MCF 10A (cell line): ENCODE measurements at regions of chr19 and their contacts with region 1.

Region 1: DNA sequence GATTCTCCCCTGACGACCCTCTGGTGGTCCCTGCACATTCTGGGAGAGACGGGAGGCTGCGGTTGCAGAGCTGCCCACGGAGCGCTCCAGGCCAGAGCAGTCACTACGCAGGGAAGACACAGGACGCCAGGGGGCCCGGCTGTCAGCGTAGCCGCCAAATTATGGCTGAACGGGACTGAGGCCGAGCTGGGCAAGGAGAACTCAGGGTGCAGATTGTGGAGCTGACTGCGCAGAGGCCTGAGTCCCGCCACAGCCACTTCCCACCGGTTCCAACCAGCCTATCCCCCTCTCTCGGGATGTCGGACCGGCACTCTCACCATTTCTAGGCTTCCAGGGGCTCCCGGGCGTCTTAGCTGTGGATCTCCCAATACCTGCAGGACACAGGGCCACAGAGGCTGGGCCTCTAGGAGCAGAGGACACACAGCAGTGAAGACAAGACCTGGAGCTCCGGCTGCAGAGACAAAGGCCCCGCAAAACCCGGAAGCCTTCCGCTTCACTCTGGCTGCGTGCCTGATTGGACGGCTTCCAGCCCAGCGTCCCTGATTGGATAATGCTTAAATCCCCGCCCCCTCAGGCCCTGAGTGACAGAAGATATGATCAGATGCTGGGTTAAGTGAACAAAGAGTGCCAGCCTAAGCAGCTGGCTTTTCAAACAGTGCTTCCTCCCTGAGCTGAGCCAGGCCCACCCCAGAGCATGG is at the start of gene ZNF737:
- DNase-seq: peak; percentile 82
- H3K4me3 Mint-ChIP-seq: peak within 1 kb of the TSS; percentile 78
- H3K27ac Mint-ChIP-seq: peak within 1 kb of the TSS; percentile 80
- H3K4me1 Mint-ChIP-seq: no peaks in the 10 kb centered on the region
- H3K27me3 Mint-ChIP-seq: no peaks in the 10 kb centered on the region
- CTCF ChIP-seq: no peak
- total RNA-seq, gene ZNF737: 1.1 and 3.2 TPM in 2 replicates

Region 2: GRCh38 chr19:20339444-20339843 is 226.0 kb before region 1 on chr19:
- CTCF ChIA-PET with region 1: no interaction called
- POLR2A ChIA-PET with region 1: no interaction called
- intact Hi-C with region 1: no loop called
- DNase-seq: no peak
- H3K4me3 Mint-ChIP-seq: no peak overlapping the region
- H3K27ac Mint-ChIP-seq: no peak overlapping the region
- H3K4me1 Mint-ChIP-seq: no peaks in the 10 kb centered on the region
- H3K27me3 Mint-ChIP-seq: no peaks in the 10 kb centered on the region
- CTCF ChIP-seq: no peak

Region 3: DNA sequence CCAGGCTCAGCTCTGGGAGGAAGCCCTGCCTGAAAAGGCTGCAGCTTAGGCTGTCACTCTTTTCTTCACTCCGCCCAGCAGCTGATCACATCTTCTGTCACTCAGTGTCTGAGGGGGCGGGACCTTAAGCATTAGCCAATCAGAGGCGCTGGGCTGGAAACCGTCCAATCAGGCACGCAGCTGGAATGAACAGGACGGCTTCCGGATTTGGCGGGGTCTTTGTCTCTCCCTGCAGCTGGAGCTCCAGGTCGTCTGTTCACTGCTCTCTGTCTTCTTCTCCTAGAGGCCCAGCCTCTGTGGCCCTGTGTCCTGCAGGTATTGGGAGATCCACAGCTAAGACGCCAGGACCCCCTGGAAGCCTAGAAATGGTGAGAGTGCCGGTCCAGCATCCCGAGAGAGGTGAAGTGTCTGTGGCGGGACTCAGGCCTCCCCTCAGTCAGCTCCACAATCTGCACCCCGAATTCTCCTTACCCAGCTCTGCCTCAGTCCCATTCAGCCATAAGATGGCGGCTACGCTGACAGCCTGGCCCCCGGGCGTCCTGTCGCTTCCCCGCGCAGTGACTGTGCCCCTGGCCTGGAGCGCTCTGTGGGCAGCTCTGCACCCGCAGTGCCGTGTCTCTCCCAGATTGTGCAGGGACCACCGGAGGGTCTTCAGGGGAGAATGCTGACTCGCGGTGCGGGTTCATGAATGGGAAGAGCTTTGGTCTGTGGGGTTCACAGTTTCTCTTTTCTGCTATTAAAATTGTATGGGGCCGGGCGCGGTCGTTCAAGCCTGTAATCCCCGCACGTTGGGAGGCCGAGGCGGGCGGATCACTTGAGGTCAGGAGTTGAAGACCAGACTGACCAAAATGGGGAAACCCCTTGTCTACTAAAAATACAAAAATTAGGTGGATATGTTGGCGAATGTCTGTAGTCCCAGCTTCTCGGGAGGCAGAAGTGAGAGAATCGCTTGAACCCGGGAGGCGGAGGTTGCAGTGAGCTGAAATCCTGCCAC is 210.9 kb after region 1 on chr19 and contains the start of gene ZNF66:
- CTCF ChIA-PET with region 1: interaction called, 3 read pairs
- POLR2A ChIA-PET with region 1: interaction called, 10 read pairs
- intact Hi-C with region 1: no loop called
- DNase-seq: peak; percentile 94
- H3K4me3 Mint-ChIP-seq: peak within 1 kb of the TSS; percentile 92
- H3K27ac Mint-ChIP-seq: peak within 1 kb of the TSS; percentile 82
- H3K4me1 Mint-ChIP-seq: no peaks in the 10 kb centered on the region
- H3K27me3 Mint-ChIP-seq: no peaks in the 10 kb centered on the region
- CTCF ChIP-seq: no peak
- total RNA-seq, gene ZNF66: 2.1 and 2.4 TPM in 2 replicates